CD8-positive, alpha-beta T cell (primary cell): ENCODE measurements at regions of chr1 and their contacts with region 1.

Region 1: DNA sequence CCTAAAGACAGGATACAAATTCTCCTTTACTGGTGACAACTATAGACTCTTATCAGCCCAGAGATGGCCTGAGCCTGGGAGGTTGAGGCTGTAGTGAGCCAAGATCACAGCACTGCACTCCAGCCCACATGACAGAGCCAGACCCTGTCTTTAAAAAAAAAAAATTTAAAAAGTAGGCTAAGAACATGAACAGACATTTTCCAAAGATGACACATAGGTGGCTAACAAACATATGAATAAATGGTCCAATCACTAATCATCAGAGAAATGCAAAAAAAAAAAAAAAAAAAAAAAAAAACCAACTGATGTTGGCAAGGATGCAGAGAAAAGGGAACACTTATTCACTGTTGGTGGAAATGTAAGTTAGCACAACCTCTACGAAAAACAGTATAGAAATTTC is 65.0 kb downstream of the TOR3A start:
- DNase-seq: no peak
- ATAC-seq: no peak
- H3K4me3 ChIP-seq: no peak overlapping the region
- H3K4me3 Mint-ChIP-seq: no peak overlapping the region
- H3K27ac ChIP-seq: no peak overlapping the region
- H3K27ac Mint-ChIP-seq: no peak overlapping the region
- H3K4me1 ChIP-seq: peaks cover 8% of the 10 kb centered on the region
- H3K4me1 Mint-ChIP-seq: peaks cover 24% of the 10 kb centered on the region
- H3K27me3 ChIP-seq: no peaks in the 10 kb centered on the region
- H3K27me3 Mint-ChIP-seq: no peaks in the 10 kb centered on the region
- CTCF ChIP-seq: no peak

Region 2: GRCh38 chr1:179129702-179130473 is 17.0 kb before region 1 on chr1:
- CTCF ChIA-PET with region 1: no interaction called
- POLR2A ChIA-PET with region 1: interaction called, 4 read pairs
- intact Hi-C with region 1: loop called in 1 of 2 experiments (anchors 2 kb)
- DNase-seq: peak in 5 of 9 experiments; percentile 6 to 83 (median 64)
- ATAC-seq: peak; percentile 96
- H3K4me3 ChIP-seq: peak overlapping the region; percentile 12 to 26
- H3K4me3 Mint-ChIP-seq: peak overlapping the region; percentile 68
- H3K27ac ChIP-seq: peak overlapping the region; percentile 52 to 80
- H3K27ac Mint-ChIP-seq: peak overlapping the region; percentile 90
- H3K4me1 ChIP-seq: peaks cover 17% of the 10 kb centered on the region
- H3K4me1 Mint-ChIP-seq: peaks cover 19% of the 10 kb centered on the region
- H3K27me3 ChIP-seq: no peaks in the 10 kb centered on the region
- H3K27me3 Mint-ChIP-seq: no peaks in the 10 kb centered on the region
- CTCF ChIP-seq: no peak